HEK293 (cell line): ENCODE measurements at regions of chr11 and their contacts with region 1.

Region 1: DNA sequence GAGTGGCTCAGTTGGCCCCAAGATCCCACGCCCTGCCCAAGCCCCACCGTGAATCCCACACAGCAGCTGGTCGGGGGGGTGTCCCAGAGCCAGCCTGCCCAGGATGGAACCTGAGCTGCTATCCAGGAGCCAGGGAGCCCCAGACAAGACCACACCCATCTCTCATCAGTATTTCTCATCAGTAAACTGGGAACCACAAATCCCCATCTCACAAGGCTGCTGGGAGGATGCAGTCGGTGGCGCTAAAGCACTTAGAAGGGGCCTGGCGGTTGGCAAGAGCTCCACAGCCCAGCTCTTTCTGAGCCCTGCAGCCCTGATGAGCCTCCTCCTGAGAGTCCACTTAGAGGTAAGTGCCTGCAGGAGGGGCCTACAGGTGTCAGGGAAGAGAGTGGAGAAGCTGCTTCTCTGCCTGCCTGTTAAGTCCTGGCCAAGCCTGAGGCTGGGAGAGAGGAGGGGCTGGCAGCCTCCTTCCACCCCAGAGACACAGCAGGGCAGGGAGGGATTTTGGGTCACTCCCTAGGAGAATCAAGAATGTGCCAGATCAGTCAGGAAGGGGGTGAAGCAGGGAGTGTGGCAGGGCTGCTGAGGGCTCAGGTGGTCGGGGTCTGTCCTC is 6.1 kb downstream of the FADS3 start:
- H3K4me3 ChIP-seq: no peak overlapping the region
- H3K27ac ChIP-seq: no peak overlapping the region
- H3K4me1 ChIP-seq: no peaks in the 10 kb centered on the region; the same call in 1 of the 2 replicates
- CTCF ChIP-seq: no peak

Region 2: DNA sequence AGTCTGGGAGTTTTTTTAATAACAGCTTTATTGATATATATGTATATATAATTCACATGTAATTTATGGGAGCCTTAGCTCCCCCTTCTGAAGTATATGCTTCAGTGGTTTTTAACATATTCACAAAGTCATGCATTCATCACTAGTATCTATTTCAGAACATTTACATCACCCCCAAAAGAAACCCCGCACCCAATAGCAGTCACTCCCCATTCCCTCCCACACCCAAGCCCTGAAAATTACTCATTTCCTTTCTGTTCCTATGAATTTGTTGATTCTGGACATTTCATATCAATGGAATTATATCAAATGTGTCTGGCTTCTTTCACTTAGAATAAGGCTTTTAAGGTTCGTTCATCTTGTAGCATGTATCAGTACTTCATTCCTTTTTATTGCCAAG is 268.8 kb before region 1 on chr11:
- CTCF ChIA-PET with region 1: no interaction called
- POLR2A ChIA-PET with region 1: no interaction called
- H3K4me3 ChIP-seq: no peak overlapping the region
- H3K27ac ChIP-seq: no peak overlapping the region
- H3K4me1 ChIP-seq: no peaks in the 10 kb centered on the region
- CTCF ChIP-seq: no peak

Region 3: DNA sequence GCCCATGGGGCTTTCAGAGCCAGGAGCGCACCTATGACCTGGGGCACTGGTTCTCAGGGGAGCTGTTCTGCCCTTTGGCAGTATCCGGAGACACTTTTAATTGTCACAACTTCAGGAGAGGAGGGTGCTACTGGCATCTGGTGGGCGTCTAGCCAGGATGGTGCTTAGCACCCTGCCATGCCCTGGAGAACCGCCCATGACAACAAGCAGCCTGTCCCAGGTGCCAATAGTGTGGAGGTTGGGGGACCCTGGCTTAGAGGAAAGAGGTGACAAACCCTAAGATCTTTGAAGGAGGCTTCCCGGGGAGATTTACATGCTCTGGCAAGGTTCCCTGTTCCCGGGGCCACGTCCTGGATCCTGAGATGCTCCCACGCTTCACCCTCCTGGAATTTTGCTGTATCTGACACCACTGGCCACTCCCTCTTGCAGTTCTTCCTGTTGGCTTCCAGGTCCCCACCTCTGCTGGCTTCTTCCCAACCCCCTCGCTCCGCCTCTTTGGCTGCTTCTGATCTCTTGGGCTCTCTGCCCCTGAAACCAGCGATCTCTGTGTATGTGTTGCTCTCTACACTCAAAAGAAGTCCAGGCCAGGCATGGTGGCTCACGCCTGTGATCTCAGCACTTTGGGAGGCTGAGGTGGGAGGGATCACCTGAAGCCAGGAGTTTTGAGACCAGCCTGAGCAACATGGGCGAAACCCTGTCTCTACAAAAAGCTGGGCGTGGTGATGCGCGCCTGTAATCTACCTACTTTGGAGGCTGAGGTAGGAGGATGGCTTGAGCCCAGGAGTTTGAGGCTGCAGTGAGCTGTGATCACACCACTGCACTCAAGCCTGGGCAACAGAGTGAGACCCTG is 25.0 kb before region 1 on chr11:
- CTCF ChIA-PET with region 1: no interaction called
- POLR2A ChIA-PET with region 1: no interaction called
- H3K4me3 ChIP-seq: no peak overlapping the region
- H3K27ac ChIP-seq: no peak overlapping the region
- H3K4me1 ChIP-seq: no peaks in the 10 kb centered on the region
- CTCF ChIP-seq: no peak

Region 4: DNA sequence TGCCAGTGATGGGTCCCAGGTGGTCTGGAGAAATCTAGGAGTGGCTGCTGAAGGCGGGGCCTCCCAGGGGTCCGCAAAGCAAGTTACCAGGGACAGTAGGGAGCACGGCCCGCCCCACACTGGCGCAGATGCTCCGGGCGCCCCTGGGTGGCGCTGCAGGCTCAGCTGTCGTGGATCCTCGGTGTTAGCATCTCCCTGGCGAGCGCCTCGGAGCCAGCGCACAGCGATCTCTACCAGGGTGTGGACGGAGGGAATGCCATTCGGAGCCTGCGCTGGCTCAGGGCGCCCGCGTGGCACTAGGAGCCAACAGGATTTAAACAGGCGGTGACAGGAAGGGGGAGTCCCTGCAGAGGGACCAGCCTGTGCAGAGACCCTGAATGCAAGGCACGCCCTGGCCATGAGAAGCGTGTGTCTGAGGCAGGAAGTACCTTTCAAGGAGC is 14.1 kb before region 1 on chr11:
- CTCF ChIA-PET with region 1: interaction called, 48 read pairs
- POLR2A ChIA-PET with region 1: no interaction called
- H3K4me3 ChIP-seq: no peak overlapping the region
- H3K27ac ChIP-seq: no peak overlapping the region
- H3K4me1 ChIP-seq: no peaks in the 10 kb centered on the region
- CTCF ChIP-seq: peak; percentile 95

Region 5: DNA sequence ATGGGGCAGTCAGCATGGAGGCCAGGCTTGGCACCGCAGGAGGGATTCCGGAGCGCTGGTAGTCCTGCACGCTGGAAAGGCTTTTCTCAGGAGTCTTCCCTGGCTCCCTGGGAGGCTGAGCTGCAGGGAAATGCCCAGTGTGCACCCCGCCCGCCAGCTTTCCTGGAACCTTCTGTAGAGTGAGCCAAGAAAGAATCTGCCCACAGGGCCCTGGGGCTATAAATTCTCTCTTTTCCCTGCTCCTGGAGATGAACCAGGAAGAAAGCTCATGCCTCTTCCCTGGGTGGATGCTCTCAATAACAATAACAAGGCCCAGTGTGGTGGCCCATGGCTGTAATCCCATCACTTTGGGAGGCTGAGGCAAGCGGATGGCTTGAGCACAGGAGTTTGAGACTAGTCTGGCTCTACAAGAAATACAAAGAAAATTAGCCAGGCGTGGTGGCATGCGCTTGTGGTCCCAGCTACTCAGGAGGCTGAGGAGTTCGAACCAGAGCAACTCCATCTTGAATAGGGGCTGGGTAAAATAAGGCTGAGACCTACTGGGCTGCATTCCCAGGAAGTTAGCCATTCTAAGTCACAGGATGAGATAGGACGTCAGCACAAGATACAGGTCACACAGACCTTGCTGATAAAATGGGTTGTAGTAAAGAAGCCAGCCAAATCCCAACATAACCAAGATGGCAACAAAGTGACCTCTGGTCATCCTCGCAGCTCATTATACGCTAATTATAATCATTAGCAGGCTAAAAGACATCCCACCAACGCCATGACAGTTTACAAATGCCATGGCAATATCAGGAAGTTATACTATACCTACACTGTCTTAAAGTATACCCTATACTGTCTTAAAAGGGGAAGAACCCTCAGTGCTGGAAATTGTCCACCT is 128.6 kb after region 1 on chr11:
- CTCF ChIA-PET with region 1: no interaction called
- POLR2A ChIA-PET with region 1: no interaction called
- H3K4me3 ChIP-seq: no peak overlapping the region
- H3K27ac ChIP-seq: no peak overlapping the region
- H3K4me1 ChIP-seq: no peaks in the 10 kb centered on the region
- CTCF ChIP-seq: no peak